GM13977 (cell line): ENCODE measurements at regions of chr10 and their contacts with region 1.

Region 1: GRCh38 chr10:32795598-32796183 is 162.3 kb downstream of the ITGB1 start:
- DNase-seq: peak; percentile 24
- CTCF ChIP-seq: peak; percentile 66

Region 2: GRCh38 chr10:33155720-33156638 is 360.3 kb after region 1 on chr10:
- in situ Hi-C with region 1: loop called (anchors 25 kb)
- DNase-seq: peak; percentile 35
- CTCF ChIP-seq: peak; percentile 54